Vagina (tissue), 2 donors: ENCODE measurements at regions of chr14 and their contacts with region 1.

Region 1: GRCh38 chr14:38721822-38722431 is 381.1 kb downstream of the SEC23A start:
- DNase-seq: no peak
- H3K4me3 ChIP-seq: no peak overlapping the region
- H3K27ac ChIP-seq: no peak overlapping the region
- H3K4me1 ChIP-seq: no peaks in the 10 kb centered on the region
- H3K27me3 ChIP-seq: no peaks in the 10 kb centered on the region
- CTCF ChIP-seq: peak in 2 of 3 experiments; percentile 12 to 58
- POLR2A ChIP-seq: no peak

Region 2: DNA sequence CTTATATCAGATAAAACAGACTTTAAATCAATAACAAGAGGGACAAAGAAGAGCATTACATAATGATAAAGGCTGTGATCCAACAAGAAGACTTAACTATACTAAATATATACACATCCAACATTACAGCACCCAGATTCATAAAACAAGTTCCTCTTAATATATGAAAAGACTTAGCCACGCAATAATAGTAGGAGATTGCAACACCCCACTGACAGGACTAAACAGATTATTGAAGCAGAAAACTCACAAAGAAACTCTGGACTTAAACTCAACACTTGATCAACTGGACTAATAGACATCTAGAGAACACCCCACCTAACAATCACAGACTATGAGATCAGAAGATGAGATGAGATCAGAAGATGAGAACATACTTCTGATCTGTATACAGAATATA is 460.3 kb before region 1 on chr14:
- intact Hi-C with region 1: no loop called
- DNase-seq: no peak
- H3K4me3 ChIP-seq: no peak overlapping the region
- H3K27ac ChIP-seq: no peak overlapping the region
- H3K4me1 ChIP-seq: no peaks in the 10 kb centered on the region
- H3K27me3 ChIP-seq: no peaks in the 10 kb centered on the region
- CTCF ChIP-seq: no peak
- POLR2A ChIP-seq: no peak

Region 3: GRCh38 chr14:38481952-38482678 is 239.8 kb before region 1 on chr14:
- intact Hi-C with region 1: loop called (anchors 5 kb)
- DNase-seq: no peak
- H3K4me3 ChIP-seq: no peak overlapping the region
- H3K27ac ChIP-seq: no peak overlapping the region
- H3K4me1 ChIP-seq: no peaks in the 10 kb centered on the region
- H3K27me3 ChIP-seq: no peaks in the 10 kb centered on the region
- CTCF ChIP-seq: no peak
- POLR2A ChIP-seq: no peak

Region 4: GRCh38 chr14:38755036-38755435 is 33.1 kb after region 1 on chr14:
- intact Hi-C with region 1: no loop called
- DNase-seq: no peak
- H3K4me3 ChIP-seq: no peak overlapping the region
- H3K27ac ChIP-seq: no peak overlapping the region
- H3K4me1 ChIP-seq: no peaks in the 10 kb centered on the region
- H3K27me3 ChIP-seq: no peaks in the 10 kb centered on the region
- CTCF ChIP-seq: no peak
- POLR2A ChIP-seq: no peak

Region 5: GRCh38 chr14:38867561-38868150 is 145.7 kb after region 1 on chr14:
- intact Hi-C with region 1: loop called (anchors 5 kb)
- DNase-seq: no peak
- H3K4me3 ChIP-seq: no peak overlapping the region
- H3K27ac ChIP-seq: no peak overlapping the region
- H3K4me1 ChIP-seq: no peaks in the 10 kb centered on the region
- H3K27me3 ChIP-seq: no peaks in the 10 kb centered on the region
- CTCF ChIP-seq: peak; percentile 18 to 63 (median 57)
- POLR2A ChIP-seq: no peak